ENCODE measurements at regions of chr6 and their contacts with region 1.

Region 1: DNA sequence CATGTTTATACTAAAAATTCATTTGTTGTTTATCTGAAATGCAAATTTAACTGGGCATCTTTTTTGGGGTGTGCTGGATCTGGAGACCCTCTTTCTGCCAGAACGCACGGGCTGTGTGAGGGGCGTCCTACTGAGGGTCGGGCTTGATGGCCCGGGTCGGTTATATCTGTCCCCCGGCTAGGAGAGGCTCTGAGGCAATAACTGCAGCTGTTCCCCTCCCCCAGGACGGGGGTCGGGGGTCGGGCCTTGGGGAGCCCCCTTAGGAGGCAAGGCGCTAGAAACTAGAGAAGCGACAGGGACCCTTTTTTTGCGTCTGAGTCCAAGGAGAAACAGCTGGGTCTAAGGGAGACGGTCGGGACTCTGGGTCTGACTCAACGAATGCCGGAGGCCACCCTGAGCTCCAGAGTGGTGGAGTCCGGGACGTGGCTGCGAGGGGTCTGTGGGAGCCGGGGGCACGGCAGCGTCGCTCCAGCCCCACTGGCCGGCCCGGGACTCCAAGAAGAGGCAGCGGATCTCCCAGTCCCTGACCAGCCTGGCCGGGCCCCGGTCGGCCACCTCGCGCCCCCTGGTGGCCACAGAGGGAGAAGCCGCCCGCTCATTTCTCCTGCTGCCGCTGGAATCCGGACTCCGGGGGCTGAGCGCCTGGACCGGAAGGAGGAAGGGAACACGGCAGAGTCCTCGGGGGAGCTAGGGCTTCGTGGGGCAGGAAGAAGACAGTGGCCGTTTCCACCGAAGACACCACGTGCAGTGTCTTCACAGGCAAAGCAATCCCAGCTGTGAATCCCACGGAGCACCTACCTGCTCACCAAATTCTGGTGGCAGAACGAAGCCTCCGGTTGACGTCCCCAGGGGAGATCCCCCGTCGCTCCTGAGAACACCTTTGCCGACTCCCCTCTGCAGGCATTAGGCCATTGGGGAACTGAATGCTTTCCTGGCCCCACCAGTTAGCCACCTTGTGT is 24.0 kb upstream of the SCML4 start:
- DNase-seq: peak; percentile 50 to 98
- H3K4me3 ChIP-seq: peak overlapping the region; percentile 53 to 80 (median 70)
- H3K27ac ChIP-seq: no peak overlapping the region
- H3K4me1 ChIP-seq: peaks cover 0 to 5% (median 0%) of the 10 kb centered on the region in 4 experiments; a peak in 2 of 7 replicates
- H3K27me3 ChIP-seq: peaks cover 0 to 7% (median 4%) of the 10 kb centered on the region in 4 experiments; a peak in 5 of 7 replicates
- CTCF ChIP-seq: peak; percentile 70 to 94 (median 93)
- EP300 ChIP-seq: no peak
- POLR2A ChIP-seq: peak in 1 of 2 experiments; percentile 51; a peak in 1 of 3 replicates
- RAD21 ChIP-seq: peak; percentile 84 to 90

Region 2: DNA sequence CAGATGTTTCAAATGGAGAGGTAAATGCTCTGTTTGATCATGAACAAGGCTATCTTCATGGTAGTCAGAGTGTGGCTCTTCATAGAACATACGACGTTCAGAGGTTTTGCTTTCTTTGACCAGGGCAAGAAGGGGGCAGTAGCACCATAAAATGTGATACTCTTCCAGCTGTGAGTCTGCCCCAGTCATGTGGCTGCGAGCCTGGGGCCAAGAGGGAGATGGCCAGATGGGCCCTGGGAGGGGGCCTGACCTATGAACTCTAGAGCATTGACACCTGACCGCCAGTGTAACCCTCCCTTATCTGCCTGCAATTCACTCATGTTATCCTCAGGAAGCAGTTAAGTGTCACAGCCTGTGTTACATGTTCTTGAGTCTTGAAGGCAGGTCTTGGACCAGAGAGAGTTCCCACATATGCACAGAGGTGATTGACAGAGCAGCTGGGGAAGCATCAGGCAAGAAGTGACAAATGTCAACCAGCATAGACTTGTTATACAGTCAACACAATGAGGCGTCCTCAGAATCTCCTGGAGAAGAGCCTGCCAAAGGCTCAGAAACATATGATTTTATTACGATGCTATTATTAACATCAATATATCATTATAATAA is 79.0 kb before region 1 on chr6:
- CTCF ChIA-PET with region 1: interaction called, 19 read pairs
- POLR2A ChIA-PET with region 1: no interaction called
- DNase-seq: no peak
- H3K4me3 ChIP-seq: no peak overlapping the region
- H3K27ac ChIP-seq: no peak overlapping the region
- H3K4me1 ChIP-seq: peaks cover 0 to 11% (median 2%) of the 10 kb centered on the region in 4 experiments; a peak in 4 of 7 replicates
- H3K27me3 ChIP-seq: no peaks in the 10 kb centered on the region
- CTCF ChIP-seq: no peak
- EP300 ChIP-seq: no peak
- POLR2A ChIP-seq: no peak
- RAD21 ChIP-seq: peak in 1 of 2 experiments; percentile 12; a peak in 1 of 4 replicates

Region 3: DNA sequence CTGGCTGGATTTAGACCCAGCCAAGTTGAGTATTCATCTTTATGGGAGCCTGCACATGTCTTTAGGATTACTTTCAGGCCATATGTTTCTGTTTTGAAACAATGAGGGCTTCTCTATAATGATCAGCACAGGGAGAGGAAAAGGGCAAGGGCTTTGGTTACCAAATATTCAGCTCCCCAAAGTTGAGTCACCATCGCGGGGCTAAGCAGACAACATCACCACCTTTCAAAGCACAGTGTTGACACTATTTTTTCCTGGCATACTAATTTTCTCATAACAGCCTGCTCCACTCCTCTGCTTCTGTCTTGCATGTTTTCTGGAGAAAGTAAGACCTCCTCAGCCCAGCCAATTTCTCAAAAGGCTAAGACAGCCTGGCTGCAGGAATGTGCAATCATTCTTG is 28.9 kb before region 1 on chr6:
- CTCF ChIA-PET with region 1: interaction called, 14 read pairs
- POLR2A ChIA-PET with region 1: no interaction called
- DNase-seq: peak in 1 of 2 experiments; percentile 27
- H3K4me3 ChIP-seq: no peak overlapping the region
- H3K27ac ChIP-seq: no peak overlapping the region
- H3K4me1 ChIP-seq: peaks cover 0 to 6% (median 1%) of the 10 kb centered on the region in 4 experiments; a peak in 3 of 7 replicates
- H3K27me3 ChIP-seq: no peaks in the 10 kb centered on the region
- CTCF ChIP-seq: no peak
- EP300 ChIP-seq: no peak
- POLR2A ChIP-seq: no peak
- RAD21 ChIP-seq: no peak

Region 4: DNA sequence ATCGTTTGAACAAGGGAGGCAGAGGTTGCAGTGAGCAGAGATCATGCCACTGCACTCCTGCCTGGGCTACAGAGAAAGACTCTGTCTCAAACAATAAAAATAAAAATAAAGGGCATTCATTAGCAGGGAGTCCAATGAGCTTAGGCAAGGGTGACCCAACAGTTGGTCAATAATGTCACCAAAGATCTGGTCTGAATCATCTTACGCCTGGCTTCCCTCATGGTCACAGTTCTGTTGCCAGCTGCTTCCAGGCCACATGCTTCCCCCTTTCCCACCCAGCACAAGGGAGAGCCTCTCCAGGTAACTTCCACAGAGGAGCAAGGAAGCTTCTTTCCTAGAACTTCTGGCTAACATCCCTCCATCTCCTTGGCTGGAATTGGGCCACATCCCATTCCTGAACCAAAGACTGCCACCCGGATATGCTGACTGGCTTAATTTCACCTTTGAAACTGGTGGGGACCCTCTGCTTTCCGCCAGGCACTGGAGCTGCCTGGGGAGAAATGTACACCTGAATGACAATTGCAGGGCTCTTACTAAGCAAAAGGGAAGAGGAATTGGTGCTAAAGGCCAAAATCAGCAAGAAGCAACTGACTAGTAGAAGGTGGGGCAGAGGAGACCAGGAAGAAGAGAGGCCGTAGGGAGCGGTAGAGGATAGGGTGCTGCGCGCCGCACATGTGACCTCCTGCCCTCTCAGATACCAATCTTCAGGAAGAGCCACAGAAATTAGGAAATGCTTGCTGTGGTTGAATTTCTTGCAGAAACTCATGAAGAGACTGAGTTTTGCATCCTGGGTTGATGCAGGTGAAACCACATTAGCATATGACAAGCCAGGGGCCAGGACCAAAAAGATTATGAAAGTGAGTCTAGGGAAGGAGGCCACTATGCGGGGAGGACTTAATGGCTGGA is 15.7 kb before region 1 on chr6:
- CTCF ChIA-PET with region 1: interaction called, 26 read pairs
- POLR2A ChIA-PET with region 1: no interaction called
- DNase-seq: no peak
- H3K4me3 ChIP-seq: no peak overlapping the region
- H3K27ac ChIP-seq: no peak overlapping the region
- H3K4me1 ChIP-seq: no peaks in the 10 kb centered on the region; a peak in 3 of 7 replicates
- H3K27me3 ChIP-seq: no peaks in the 10 kb centered on the region
- CTCF ChIP-seq: no peak
- EP300 ChIP-seq: no peak
- POLR2A ChIP-seq: no peak
- RAD21 ChIP-seq: no peak

Region 5: DNA sequence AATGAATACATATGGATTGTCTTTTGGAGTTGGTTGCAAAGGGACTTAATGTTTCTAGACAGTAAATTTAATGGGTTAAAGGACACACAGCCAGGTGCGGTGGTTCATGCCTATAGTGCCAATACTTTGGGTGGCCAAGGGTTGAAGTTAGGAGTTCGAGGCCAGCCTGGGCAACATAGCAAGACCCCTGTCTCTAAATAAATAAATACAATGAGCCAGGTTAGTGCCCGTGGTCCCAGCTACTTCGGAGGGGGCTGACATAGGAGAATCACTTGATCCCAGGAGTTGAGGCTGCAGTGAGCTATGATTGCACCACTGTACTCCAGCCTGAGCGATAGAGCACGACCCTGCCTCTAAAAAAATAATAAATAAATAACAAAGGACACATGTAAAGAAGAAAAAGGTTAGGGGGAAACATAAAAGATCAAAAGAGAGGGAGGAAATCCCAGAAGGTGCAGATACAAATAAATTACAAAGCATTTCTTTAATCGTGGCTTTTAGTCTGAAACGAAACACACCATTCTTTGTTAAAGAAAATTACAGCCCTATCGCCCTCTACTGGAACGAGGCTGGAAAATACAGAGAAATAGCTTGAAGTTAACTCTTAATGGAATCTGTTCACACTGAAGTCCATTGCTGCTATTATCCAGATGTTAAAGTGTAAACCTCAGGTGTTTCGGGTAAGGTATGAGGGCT is 18.6 kb after region 1 on chr6:
- CTCF ChIA-PET with region 1: interaction called, 42 read pairs
- POLR2A ChIA-PET with region 1: no interaction called
- DNase-seq: no peak
- H3K4me3 ChIP-seq: no peak overlapping the region
- H3K27ac ChIP-seq: no peak overlapping the region
- H3K4me1 ChIP-seq: peaks cover 0 to 14% (median 10%) of the 10 kb centered on the region in 4 experiments
- H3K27me3 ChIP-seq: no peaks in the 10 kb centered on the region
- CTCF ChIP-seq: peak in 2 of 3 experiments; percentile 44 to 59; a peak in 2 of 4 replicates
- EP300 ChIP-seq: no peak
- POLR2A ChIP-seq: no peak; a peak in 1 of 3 replicates
- RAD21 ChIP-seq: peak; percentile 39 to 49

Region 6: GRCh38 chr6:107991061-107991460 is 142.9 kb after region 1 on chr6:
- CTCF ChIA-PET with region 1: no interaction called
- POLR2A ChIA-PET with region 1: no interaction called
- DNase-seq: no peak
- H3K4me3 ChIP-seq: no peak overlapping the region
- H3K27ac ChIP-seq: no peak overlapping the region
- H3K4me1 ChIP-seq: peaks cover 0 to 19% (median 10%) of the 10 kb centered on the region in 4 experiments; a peak in 6 of 7 replicates
- H3K27me3 ChIP-seq: no peaks in the 10 kb centered on the region
- CTCF ChIP-seq: no peak
- EP300 ChIP-seq: no peak
- POLR2A ChIP-seq: no peak
- RAD21 ChIP-seq: no peak

Measured in H1 (cell line).